ENCODE measurements at regions of chr3 and their contacts with region 1.

Region 1: DNA sequence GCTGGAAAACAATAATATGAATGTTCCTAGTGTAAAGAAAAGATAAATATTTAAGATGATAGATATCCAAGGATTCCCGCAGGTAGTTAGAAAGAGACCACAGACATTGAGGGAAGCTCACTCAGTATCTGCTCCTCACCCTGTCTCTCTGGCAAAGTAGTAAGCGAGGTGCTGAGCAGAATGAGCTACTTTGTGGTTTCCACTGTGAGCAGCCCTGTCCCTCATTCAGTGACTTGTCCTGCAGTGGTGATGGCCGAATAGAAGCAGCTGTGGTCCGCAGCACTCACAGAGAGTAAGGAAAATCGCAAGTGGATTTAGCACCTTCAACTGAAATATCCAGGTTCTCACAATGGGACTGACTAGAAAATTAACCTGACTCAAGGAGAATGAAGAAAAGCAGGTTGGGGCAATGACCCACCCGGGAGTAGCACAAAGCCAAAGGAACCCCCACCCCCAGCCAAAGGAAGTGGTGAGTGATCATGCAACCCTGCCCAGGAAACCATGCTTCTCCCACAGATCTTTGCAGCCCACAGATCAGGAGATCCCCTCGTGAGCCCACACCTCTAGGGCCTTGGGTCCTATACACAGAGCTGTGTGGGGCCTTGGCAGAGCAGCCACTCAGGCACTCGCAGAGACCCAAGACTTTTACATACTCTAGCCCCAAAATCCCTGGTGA is 21.8 kb upstream of the SLC25A38 start:
- DNase-seq: peak; percentile 75
- H3K4me3 Mint-ChIP-seq: peak overlapping the region; percentile 77
- H3K27ac Mint-ChIP-seq: peak overlapping the region; percentile 88
- H3K4me1 Mint-ChIP-seq: peaks cover 73% of the 10 kb centered on the region
- H3K27me3 Mint-ChIP-seq: no peaks in the 10 kb centered on the region

Region 2: DNA sequence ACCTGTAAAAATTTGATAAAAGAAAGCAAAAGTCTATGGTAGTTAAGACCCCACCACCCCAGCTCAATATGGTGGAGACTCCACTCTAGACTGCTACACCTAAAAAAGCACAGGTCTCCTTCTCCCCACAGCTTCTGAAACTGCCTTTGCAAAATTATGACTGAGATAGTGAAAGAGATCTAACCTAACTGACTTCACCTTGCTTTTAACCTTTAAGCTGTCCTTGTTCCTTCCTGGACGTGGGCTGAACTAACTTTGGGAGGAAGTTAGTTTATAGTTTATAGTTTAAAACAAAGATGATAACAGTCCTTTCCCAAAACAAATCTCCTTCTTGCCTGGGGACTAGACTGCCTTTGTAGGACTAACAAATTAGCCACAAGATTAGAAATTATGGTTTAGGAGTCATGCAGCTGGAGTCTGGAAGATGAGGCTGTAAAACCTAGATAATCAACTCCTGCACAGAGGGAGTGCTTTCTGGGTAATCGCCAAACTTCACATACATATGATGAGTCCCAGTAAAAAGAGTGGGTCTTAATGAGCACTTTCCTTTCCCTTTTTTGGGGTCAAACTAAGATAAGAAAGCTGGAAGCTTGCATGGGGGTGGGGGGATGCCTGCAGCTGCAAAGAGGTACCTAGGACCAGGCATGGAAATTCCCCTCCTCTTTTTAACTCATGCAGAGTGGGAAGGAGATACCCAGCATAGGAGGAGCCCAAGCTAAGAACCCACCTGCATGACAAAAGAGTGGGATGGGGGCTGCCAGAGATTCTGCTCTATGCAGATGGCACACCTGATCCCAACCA is 14.4 kb before region 1 on chr3:
- intact Hi-C with region 1: loop called (anchors 1 kb)
- DNase-seq: no peak
- H3K4me3 Mint-ChIP-seq: peak overlapping the region; percentile 26
- H3K27ac Mint-ChIP-seq: peak overlapping the region; percentile 47
- H3K4me1 Mint-ChIP-seq: peaks cover 65% of the 10 kb centered on the region
- H3K27me3 Mint-ChIP-seq: no peaks in the 10 kb centered on the region

Measured in activated T-helper 2 cell treated with anti-CD3 and anti-CD28 coated beads, Interferon-gamma antibody, Interleukin-2, Interleukin-4, amounts not matched to agents 10 μg/mL and 5 μg/mL and 100 μg/mL, durations not matched to agents 14 hours and 24 hours and 36 hours (primary cell).